Head of caudate nucleus (tissue), 42 donors: ENCODE measurements at regions of chr18 and their contacts with region 1.

Region 1: DNA sequence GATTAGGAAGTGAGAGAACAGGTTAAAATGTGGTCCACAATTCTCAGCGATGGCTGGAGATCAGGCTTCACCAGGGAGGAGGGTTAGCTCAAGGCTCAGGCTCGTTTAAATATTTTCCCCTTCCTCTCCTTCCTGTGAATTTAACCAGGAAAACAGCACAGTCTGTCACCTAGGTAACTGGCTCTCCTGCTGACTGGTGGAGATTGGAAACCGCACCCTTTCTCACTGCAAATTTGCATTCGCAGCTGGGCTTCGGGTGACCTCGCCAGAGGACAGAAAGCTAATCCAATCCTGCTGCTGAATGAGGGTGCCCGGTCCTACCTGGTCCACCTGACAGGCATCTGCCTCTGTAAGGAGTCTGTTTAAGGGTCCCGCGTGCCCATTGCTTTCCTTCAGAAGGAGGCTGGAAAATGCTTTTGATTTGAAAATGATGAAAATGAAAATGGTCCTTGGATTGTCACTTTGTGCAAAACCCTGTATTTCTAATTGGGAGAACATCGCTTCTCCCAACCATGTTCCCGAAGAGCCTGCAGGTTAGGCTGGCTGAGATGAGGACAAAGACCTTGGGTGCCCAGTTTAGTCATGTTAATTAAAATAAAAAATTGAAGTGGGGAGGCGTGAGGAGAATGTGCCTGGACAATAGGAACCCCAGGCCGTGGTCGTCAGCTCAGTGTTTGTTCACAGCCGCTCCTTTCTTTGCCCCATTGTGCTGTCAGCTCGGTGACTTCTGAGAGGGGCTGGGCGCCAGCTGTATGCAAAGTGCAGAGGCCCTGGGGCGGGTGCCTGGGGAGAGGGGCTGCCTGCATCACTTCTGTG is 43.4 kb upstream of the MTCL1 start:
- DNase-seq: peak in 6 of 42 donors; percentile 15 to 57 (median 20)

Region 2: DNA sequence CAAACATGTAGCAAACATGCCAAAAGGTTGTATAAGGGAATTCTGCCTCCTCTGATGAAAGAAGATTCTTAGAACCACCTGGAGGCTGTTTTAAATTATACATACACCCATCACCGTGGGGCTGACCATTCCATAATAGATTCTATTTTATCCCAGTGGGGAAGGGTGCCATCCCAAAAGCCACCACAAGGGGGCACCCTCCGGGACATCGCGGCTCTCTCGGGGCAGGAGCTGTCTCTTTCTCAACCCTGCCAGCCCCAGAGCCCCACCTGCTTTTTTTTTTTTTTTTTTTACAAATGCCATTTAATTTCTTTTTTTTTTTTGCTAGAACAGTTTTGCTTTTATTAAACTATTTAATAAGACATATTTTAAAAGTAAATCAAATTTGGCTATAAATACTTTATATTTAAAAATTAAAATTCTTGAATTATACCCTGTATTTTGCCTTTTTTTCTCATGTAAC is 34.8 kb after region 1 on chr18:
- intact Hi-C with region 1: loop called (anchors 2 kb)
- DNase-seq: peak in 41 of 42 donors; percentile 51 to 93 (median 82)

Region 3: GRCh38 chr18:8948471-8949149 is 286.6 kb after region 1 on chr18:
- intact Hi-C with region 1: no loop called
- DNase-seq: peak in 6 of 42 donors; percentile 14 to 55 (median 25)